ENCODE measurements at regions of chr14 and their contacts with region 1.

Region 1: DNA sequence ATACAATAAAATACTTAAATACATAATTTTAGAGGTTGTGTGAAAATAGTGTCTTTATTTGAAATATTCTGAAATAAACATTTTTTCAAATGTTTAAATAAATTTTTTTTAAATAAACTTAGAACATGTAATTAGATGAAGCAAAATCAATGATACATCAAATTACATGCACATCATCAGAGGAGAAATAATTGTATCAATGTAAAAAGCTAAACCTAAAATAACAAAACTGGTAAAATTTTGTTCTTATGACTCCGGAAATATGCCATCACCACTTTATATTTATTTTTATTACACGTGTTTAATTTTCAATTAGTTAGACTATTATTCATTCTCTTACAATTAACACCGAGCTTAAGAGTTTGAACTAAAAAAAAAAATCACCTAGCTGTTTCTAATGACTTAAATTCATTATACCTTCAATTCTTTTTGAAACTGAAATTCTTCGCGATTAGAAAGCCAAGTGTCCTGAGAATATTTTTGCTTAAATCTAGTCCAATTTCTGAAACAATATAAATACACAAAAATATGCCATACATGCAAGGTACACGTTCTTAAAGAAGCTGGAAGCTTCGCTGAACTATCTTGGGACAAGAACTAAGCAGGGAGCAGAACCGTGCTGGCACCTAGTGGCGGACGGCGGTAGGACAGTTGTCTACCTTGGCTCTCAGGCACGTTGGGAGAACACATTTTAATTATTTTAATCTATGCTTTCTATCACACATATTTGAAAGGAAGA is 230.5 kb downstream of the SLC25A21 start:
- DNase-seq: peak; percentile 78
- H3K4me3 Mint-ChIP-seq: no peak overlapping the region
- H3K27ac Mint-ChIP-seq: peak overlapping the region; percentile 96
- H3K4me1 Mint-ChIP-seq: peaks cover 24% of the 10 kb centered on the region
- H3K27me3 Mint-ChIP-seq: no peaks in the 10 kb centered on the region
- CTCF ChIP-seq: peak; percentile 90

Region 2: GRCh38 chr14:36661756-36662498 is 280.0 kb before region 1 on chr14 and contains the start of gene PAX9:
- CTCF ChIA-PET with region 1: interaction called, 19 read pairs
- POLR2A ChIA-PET with region 1: interaction called, 11 read pairs
- intact Hi-C with region 1: loop called (anchors 5 kb)
- DNase-seq: peak; percentile 96
- H3K4me3 Mint-ChIP-seq: peak within 1 kb of the TSS; percentile 97
- H3K27ac Mint-ChIP-seq: peak within 1 kb of the TSS; percentile 92
- H3K4me1 Mint-ChIP-seq: peaks cover 27% of the 10 kb centered on the region
- H3K27me3 Mint-ChIP-seq: no peaks in the 10 kb centered on the region
- CTCF ChIP-seq: no peak
- total RNA-seq, gene PAX9: 5.5 and 7.3 TPM in 2 replicates

Region 3: GRCh38 chr14:36773136-36773540 is 168.8 kb before region 1 on chr14:
- CTCF ChIA-PET with region 1: interaction called, 25 read pairs
- POLR2A ChIA-PET with region 1: interaction called, 4 read pairs
- intact Hi-C with region 1: loop called (anchors 1 kb)
- DNase-seq: peak; percentile 56
- H3K4me3 Mint-ChIP-seq: no peak overlapping the region
- H3K27ac Mint-ChIP-seq: no peak overlapping the region
- H3K4me1 Mint-ChIP-seq: peaks cover 5% of the 10 kb centered on the region
- H3K27me3 Mint-ChIP-seq: no peaks in the 10 kb centered on the region
- CTCF ChIP-seq: peak; percentile 34

Region 4: DNA sequence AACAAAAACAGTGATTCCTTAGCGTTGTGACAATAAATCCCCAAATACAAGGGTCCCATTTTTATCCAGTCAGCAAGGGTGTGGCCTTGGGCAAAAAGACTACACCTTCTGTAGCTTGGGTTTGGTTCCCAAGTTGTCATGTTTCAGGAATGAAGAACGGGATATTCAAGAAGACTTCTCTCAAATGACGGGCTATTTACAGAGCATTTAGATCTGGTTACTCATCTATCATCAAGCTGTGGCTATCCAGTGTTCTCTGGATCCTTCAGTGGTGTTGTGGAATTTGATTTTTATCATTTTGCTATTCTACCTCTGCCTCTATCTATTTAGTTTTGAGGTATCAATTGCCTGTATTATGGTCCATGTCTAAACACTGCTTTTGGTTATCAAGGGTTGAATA is 10.8 kb after region 1 on chr14:
- CTCF ChIA-PET with region 1: interaction called, 15 read pairs
- POLR2A ChIA-PET with region 1: interaction called, 3 read pairs
- intact Hi-C with region 1: no loop called
- DNase-seq: peak; percentile 35
- H3K4me3 Mint-ChIP-seq: no peak overlapping the region
- H3K27ac Mint-ChIP-seq: peak overlapping the region; percentile 74
- H3K4me1 Mint-ChIP-seq: peaks cover 12% of the 10 kb centered on the region
- H3K27me3 Mint-ChIP-seq: no peaks in the 10 kb centered on the region
- CTCF ChIP-seq: no peak

Region 5: GRCh38 chr14:37142835-37143401 is 201.0 kb after region 1 on chr14:
- CTCF ChIA-PET with region 1: interaction called, 29 read pairs
- POLR2A ChIA-PET with region 1: interaction called, 3 read pairs
- intact Hi-C with region 1: no loop called
- DNase-seq: peak; percentile 51
- H3K4me3 Mint-ChIP-seq: no peak overlapping the region
- H3K27ac Mint-ChIP-seq: peak overlapping the region; percentile 47
- H3K4me1 Mint-ChIP-seq: peaks cover 19% of the 10 kb centered on the region
- H3K27me3 Mint-ChIP-seq: no peaks in the 10 kb centered on the region
- CTCF ChIP-seq: no peak

Measured in MCF 10A (cell line).